PC-9 (cell line): ENCODE measurements at regions of chr6 and their contacts with region 1.

Region 1: DNA sequence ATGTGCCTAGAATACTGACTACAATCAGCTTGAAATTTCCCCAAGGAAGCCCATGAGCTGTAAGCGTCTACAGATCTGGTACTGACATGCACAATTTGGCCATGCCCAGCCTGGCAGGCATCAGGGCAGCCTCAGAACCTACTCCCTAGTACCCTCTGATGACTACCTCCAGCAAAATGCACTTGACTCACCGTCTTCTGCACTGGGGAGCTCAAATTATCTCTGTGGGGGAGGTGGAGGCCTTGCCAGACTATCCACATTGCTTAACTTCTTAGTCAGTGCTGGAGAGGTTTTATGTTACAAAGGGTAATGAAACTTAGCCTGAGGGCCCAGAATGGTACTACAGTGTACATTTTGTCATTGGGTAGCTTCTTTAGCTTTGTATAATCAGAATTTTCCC is 126.1 kb upstream of the ADGRF1 start:
- DNase-seq: peak; percentile 87 to 98
- H3K4me3 ChIP-seq: no peak overlapping the region
- H3K27ac ChIP-seq: peak overlapping the region; percentile 93
- H3K4me1 ChIP-seq: peaks cover 66% of the 10 kb centered on the region
- H3K27me3 ChIP-seq: no peaks in the 10 kb centered on the region
- CTCF ChIP-seq: no peak

Region 2: GRCh38 chr6:46642928-46643751 is 525.0 kb before region 1 on chr6:
- CTCF ChIA-PET with region 1: no interaction called
- POLR2A ChIA-PET with region 1: interaction called, 10 read pairs
- intact Hi-C with region 1: no loop called
- DNase-seq: peak in 1 of 2 experiments; percentile 94
- H3K4me3 ChIP-seq: no peak overlapping the region
- H3K27ac ChIP-seq: peak overlapping the region; percentile 29
- H3K4me1 ChIP-seq: peaks cover 37% of the 10 kb centered on the region
- H3K27me3 ChIP-seq: no peaks in the 10 kb centered on the region
- CTCF ChIP-seq: no peak

Region 3: GRCh38 chr6:47111685-47112084 is 56.5 kb before region 1 on chr6:
- CTCF ChIA-PET with region 1: interaction called, 12 read pairs
- POLR2A ChIA-PET with region 1: interaction called, 7 read pairs
- intact Hi-C with region 1: loop called (anchors 1 kb)
- DNase-seq: peak; percentile 71 to 96
- H3K4me3 ChIP-seq: no peak overlapping the region
- H3K27ac ChIP-seq: peak overlapping the region; percentile 98
- H3K4me1 ChIP-seq: peaks cover 95% of the 10 kb centered on the region
- H3K27me3 ChIP-seq: no peaks in the 10 kb centered on the region
- CTCF ChIP-seq: no peak

Region 4: DNA sequence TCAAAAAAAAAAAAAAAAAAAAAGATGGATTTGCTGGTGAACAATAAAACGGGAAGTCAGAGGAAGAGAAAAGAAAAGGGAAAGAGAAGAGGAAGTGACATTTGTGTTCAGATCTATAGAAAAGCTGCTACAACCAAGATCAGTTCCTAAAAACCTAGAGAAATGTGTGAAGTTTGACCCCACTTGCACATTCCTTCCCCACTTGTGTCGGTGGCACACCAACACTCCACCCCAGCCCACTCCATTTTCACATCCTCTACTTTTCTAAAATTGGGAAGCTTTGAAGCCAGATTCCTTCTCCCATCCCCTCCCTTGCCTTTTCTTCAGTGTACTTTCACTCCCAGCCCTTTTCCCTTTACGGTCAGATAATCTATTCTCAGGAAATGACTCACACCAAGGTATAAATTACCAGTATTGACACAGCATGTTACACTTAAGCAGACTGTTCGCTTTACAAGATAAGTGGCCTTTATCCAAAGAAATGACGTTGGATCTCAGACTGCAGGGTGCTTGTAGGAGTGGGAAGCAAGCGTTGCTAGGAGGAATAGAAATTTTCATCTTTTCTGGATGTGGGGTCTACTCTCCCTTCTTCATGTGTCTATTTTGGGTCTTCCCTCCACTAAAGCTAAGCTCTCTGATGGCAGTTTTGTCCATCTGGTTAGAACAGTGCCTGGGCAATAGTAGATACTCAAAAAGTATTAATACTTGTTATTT is 33.5 kb before region 1 on chr6:
- CTCF ChIA-PET with region 1: no interaction called
- POLR2A ChIA-PET with region 1: interaction called, 4 read pairs
- intact Hi-C with region 1: loop called (anchors 1 kb)
- DNase-seq: peak; percentile 46 to 98
- H3K4me3 ChIP-seq: peak overlapping the region; percentile 43; the same call in 1 of the 2 replicates
- H3K27ac ChIP-seq: peak overlapping the region; percentile 100
- H3K4me1 ChIP-seq: peaks cover 73% of the 10 kb centered on the region
- H3K27me3 ChIP-seq: no peaks in the 10 kb centered on the region
- CTCF ChIP-seq: no peak

Region 5: GRCh38 chr6:47153032-47153755 is 15.0 kb before region 1 on chr6:
- CTCF ChIA-PET with region 1: interaction called, 8 read pairs
- POLR2A ChIA-PET with region 1: interaction called, 6 read pairs
- intact Hi-C with region 1: loop called (anchors 1 kb)
- DNase-seq: peak; percentile 65 to 99
- H3K4me3 ChIP-seq: no peak overlapping the region
- H3K27ac ChIP-seq: peak overlapping the region; percentile 97
- H3K4me1 ChIP-seq: peaks cover 60% of the 10 kb centered on the region
- H3K27me3 ChIP-seq: no peaks in the 10 kb centered on the region
- CTCF ChIP-seq: no peak

Region 6: DNA sequence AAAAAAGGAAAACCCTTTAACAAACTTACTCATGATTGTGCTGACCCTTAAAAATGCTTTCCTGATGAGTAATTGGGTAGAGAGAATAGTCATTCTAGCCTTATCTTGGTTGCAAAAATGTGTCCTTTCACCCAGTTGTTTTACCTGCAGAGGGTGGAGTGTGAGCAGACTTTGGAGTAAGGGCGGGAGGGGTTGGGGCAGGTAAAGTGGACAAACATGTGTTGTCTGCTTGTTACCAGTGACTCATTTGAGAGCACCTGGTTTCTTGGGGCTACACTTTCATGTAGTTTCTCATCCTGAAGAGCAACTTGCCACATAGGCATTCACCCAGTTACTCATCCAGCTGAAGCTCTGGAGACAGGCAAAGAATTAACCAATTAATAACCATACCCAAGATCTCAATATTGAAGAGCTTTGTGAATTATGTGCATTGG is 20.4 kb after region 1 on chr6:
- CTCF ChIA-PET with region 1: no interaction called
- POLR2A ChIA-PET with region 1: interaction called, 3 read pairs
- intact Hi-C with region 1: loop called (anchors 1 kb)
- DNase-seq: peak; percentile 71 to 99
- H3K4me3 ChIP-seq: 0 out of 2 replicates have a peak overlapping the region, but pooled peaks have one; percentile 2
- H3K27ac ChIP-seq: peak overlapping the region; percentile 93
- H3K4me1 ChIP-seq: peaks cover 56% of the 10 kb centered on the region
- H3K27me3 ChIP-seq: no peaks in the 10 kb centered on the region
- CTCF ChIP-seq: no peak

Region 7: GRCh38 chr6:47651505-47651944 is 483.3 kb after region 1 on chr6:
- CTCF ChIA-PET with region 1: no interaction called
- POLR2A ChIA-PET with region 1: no interaction called
- intact Hi-C with region 1: no loop called
- DNase-seq: peak in 1 of 2 experiments; percentile 52
- H3K4me3 ChIP-seq: no peak overlapping the region
- H3K27ac ChIP-seq: peak overlapping the region; percentile 75
- H3K4me1 ChIP-seq: peaks cover 36% of the 10 kb centered on the region
- H3K27me3 ChIP-seq: no peaks in the 10 kb centered on the region
- CTCF ChIP-seq: no peak